GM10248 (cell line): ENCODE measurements at regions of chr20 and their contacts with region 1.

Region 1: GRCh38 chr20:32982617-32983458 is 21.4 kb downstream of the SUN5 start:
- DNase-seq: no peak
- CTCF ChIP-seq: no peak

Region 2: GRCh38 chr20:32995802-32996201 is 13.0 kb after region 1 on chr20:
- CTCF ChIA-PET with region 1: interaction called, 10 read pairs
- POLR2A ChIA-PET with region 1: no interaction called
- DNase-seq: no peak
- CTCF ChIP-seq: no peak